Aorta (tissue), 5 donors: ENCODE measurements at regions of chr19 and their contacts with region 1.

Region 1: GRCh38 chr19:38263689-38264485 is 486 bp upstream of the SPINT2 start:
- DNase-seq: peak; percentile 84 to 86
- ATAC-seq: peak; percentile 71
- H3K4me3 ChIP-seq: peak overlapping the region; percentile 43 to 59
- H3K27ac ChIP-seq: peak overlapping the region; percentile 91 to 95
- H3K4me1 ChIP-seq: peaks cover 0 to 3% of the 10 kb centered on the region in 2 donors
- H3K27me3 ChIP-seq: no peaks in the 10 kb centered on the region

Region 2: DNA sequence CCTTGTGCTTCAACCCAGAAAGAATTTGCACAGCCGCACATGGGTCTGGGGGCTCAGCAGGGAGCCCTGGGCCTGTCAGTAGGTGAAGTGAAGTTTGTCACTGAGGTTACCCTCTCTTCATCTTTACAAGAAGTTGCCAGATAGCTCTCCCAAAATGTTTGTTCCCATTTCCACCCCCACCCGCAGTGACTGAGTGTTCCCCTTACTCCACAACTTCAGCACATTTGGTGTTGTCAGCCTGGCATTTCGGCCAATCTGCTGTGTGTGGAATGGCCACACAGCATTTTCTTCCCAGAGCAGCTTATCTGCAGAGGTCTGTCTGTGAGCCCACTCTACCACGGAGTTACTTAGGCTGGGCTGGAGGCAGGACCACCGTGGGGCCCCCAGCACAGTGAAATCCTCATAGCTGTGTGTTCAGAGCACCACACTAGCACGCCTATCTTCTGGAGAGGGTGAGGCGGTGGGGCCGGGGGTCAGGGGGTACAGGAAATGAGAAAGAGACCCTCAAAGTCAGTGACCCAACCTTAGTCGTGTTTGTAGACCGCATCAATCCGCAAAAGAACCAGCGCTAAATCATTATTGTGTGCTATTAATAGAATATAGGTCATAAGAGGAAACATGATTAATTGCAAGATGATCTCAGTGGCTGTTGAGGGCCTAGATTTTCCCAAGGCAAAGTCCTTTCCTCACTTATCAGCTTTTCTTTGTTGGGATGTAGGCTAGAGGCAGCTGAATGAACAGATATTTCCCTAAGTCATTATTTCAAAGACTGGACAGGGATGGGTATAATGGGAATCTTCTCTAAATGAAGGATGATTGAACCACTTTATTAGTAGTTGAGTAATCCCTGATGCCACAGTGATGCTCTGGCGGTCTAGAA is 240.9 kb before region 1 on chr19:
- intact Hi-C with region 1: no loop called
- DNase-seq: no peak
- ATAC-seq: no peak
- H3K4me3 ChIP-seq: no peak overlapping the region
- H3K27ac ChIP-seq: no peak overlapping the region
- H3K4me1 ChIP-seq: no peaks in the 10 kb centered on the region
- H3K27me3 ChIP-seq: no peaks in the 10 kb centered on the region

Region 3: DNA sequence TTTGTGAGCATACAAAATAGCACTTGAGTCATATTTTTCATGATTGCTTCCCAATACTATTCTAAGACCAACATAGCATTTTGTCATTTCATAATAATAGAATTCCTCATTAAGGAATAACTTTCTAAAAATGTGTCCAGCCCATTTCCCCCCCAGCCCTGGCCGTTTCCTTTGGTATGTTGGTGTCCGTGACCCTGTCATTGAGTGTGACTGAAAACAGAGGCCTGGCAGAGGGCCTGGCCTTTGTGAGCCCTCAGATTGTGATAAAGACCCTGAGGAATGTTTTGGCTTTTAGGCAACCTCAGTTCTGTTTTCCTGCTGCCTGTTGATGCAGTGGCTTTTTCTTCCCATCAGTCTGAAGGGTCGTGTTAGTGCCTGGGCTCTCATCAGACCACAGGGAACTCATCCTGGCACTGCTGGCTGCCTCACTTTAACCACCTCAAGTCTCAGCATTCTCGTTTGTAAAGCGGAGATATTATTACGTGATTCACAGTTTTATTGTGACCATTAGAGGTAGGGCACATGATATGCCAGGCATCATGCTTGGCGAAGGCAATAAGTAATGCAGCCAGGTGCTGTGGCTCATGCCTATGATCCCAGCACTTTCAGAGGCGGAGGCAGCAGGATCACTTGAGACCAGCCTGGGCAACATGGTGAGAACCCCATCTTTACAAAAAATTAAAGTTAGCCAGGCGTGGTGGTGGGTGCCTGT is 14.2 kb after region 1 on chr19:
- intact Hi-C with region 1: loop called in 1 of 2 experiments (anchors 2 kb)
- DNase-seq: peak; percentile 88 to 92
- ATAC-seq: peak; percentile 69
- H3K4me3 ChIP-seq: no peak overlapping the region
- H3K27ac ChIP-seq: peak overlapping the region; percentile 83 to 96
- H3K4me1 ChIP-seq: peaks cover 0 to 3% of the 10 kb centered on the region in 2 donors
- H3K27me3 ChIP-seq: no peaks in the 10 kb centered on the region

Region 4: DNA sequence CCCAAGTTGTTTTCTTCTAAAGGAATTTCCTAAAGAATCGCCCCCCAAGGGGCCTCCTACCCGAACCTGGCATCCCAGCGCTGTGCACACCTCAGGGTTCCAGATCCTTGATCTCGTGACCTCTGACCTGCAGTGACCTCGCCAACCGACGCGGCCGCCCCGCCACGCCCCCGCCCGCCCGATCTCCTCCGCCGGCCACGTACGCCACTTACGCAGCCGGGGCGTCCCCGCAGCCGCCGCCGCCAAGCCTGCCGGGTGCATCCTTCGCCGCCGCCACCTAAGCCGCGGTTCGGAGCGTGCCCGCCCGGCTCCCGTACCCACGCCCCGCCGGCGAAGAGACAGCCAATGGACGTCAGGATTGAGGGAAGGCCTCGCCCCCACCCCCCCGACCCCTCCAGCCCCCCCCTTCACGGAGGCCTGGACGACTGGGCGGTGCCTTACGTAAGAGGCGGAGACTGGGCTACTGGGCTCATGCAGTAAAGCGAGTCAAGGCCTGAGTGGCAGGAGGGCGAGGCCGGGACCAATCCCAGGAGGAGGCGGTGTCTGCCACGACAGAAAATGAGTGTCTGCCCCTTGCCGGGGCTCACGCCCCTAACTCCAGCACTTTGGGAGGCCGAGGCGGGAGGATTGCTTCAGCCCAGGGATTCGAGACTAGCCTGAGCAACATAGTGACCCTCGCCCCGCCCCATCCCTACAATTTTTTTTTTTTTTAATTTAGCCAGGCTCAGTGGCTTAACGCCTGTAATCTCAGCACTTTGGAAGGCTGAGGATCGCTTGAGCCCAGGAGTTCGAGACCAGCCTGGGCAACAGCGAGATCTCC is 52.0 kb after region 1 on chr19 and contains the start of gene YIF1B:
- intact Hi-C with region 1: loop called (anchors 5 kb)
- DNase-seq: peak; percentile 98
- ATAC-seq: peak; percentile 96
- H3K4me3 ChIP-seq: peak within 1 kb of the TSS; percentile 33 to 44
- H3K27ac ChIP-seq: peak within 1 kb of the TSS; percentile 20 to 43
- H3K4me1 ChIP-seq: no peaks in the 10 kb centered on the region
- H3K27me3 ChIP-seq: no peaks in the 10 kb centered on the region
- total RNA-seq, gene YIF1B: 19.5 to 25.8 TPM